ENCODE measurements at regions of chr6 and their contacts with region 1.

Region 1: DNA sequence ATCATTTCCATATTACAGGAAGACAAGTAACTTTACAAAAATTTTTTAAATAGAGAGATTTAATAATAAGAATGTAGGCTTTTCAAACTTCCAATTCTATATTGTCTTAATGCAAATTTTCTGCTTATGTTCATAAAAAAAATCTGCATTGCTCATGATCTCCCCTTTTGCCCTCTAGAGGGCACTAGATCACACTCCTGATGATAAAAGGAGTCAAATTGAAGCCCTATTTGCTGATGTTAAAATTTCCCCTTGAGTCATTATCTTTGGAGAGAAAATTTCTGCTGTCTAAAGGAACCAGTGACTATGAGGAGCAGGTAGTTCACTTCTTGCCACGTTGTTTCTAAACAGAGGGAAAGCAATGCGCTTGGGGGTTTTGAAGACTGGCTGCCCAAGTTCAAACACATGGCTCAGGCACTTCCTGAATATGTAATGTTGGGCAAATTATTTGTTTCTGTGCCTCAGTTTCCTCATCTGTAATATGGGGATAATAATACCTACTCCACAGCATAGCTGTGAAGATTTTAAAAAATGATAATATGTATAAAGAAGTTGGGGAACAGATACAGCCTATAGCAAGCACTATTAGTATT is 874.2 kb downstream of the TFAP2A start:
- DNase-seq: peak; percentile 58
- H3K4me3 ChIP-seq: no peak overlapping the region
- H3K27ac ChIP-seq: peak overlapping the region; percentile 48
- H3K4me1 ChIP-seq: peaks cover 23% of the 10 kb centered on the region
- H3K27me3 ChIP-seq: no peaks in the 10 kb centered on the region
- CTCF ChIP-seq: peak; percentile 38
- POLR2A ChIP-seq: no peak

Region 2: DNA sequence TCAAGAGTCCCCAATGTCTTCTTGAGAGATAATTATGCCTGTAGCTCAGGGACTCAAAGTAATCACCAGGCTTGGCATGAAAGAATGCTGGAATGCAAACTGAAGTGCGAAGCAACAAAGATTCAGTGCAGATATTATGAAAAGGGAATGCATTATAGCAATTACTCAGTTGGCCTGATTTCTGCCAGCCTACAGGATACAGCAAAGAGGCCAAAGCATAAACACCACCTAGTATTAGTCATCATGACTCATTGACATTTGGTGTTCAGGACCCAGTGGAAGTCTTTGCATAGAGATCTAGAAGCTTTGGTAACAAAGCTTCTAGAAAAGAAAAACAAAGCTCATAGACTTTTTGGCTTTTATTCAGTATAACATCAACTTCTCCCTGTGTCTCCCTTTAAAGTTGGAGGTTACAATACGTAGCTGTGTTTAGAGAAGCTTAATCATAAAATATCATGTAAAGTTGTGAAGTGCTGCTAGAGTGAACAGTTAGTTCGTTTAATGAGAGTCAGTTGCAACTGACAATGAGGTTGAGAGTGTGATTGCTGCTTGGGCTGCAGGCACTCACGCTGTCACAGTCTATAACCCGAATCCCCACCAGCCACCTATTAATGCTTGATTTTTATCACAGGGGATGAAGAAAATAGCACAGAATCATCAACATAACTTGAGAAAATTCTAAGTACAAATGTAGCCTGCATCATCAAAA is 58.4 kb before region 1 on chr6:
- CTCF ChIA-PET with region 1: no interaction called
- POLR2A ChIA-PET with region 1: no interaction called
- dilution Hi-C with region 1: no loop called
- intact Hi-C with region 1: loop called (anchors 1 kb)
- DNase-seq: peak; percentile 86
- H3K4me3 ChIP-seq: no peak overlapping the region
- H3K27ac ChIP-seq: peak overlapping the region; percentile 65
- H3K4me1 ChIP-seq: peaks cover 19% of the 10 kb centered on the region
- H3K27me3 ChIP-seq: no peaks in the 10 kb centered on the region
- CTCF ChIP-seq: no peak
- POLR2A ChIP-seq: no peak

Region 3: DNA sequence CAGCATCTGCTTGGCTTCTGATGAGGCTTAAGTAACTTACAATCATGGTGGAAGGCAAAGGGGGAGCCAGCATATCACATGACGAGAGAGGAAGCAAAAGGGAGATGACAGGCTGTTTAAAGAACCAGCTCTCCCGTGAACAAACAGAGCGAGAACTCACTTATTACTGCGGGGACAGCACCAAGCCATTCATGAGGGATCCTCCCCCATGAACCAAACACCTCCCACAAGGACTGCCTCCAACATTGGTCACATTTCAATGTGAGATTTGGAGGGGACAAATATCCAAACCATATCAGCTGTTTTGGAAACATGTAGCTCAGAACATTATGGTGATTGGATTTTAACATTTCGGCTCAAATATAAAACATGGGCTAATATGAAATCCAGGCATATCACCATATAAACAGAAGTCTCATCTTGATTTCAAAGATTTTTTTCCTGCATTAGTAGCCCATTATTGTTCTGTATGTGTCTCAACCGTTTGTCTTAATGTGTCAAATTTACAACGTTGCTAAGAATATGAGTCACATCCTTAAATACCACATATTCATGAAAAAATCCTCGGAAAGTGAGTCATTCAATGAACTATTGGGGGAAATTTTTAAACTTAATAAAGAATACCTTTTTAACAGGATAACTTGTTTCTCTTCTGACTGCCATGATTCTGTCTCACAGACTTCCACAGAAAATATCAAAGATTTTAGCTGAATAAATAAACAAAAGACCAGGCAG is 20.0 kb before region 1 on chr6:
- CTCF ChIA-PET with region 1: interaction called, 7 read pairs
- POLR2A ChIA-PET with region 1: no interaction called
- dilution Hi-C with region 1: no loop called
- intact Hi-C with region 1: loop called (anchors 1 kb)
- DNase-seq: peak; percentile 88
- H3K4me3 ChIP-seq: peak overlapping the region in 1 of 3 experiments; percentile 30
- H3K27ac ChIP-seq: peak overlapping the region; percentile 92
- H3K4me1 ChIP-seq: peaks cover 33% of the 10 kb centered on the region
- H3K27me3 ChIP-seq: no peaks in the 10 kb centered on the region
- CTCF ChIP-seq: no peak
- POLR2A ChIP-seq: no peak

Region 4: DNA sequence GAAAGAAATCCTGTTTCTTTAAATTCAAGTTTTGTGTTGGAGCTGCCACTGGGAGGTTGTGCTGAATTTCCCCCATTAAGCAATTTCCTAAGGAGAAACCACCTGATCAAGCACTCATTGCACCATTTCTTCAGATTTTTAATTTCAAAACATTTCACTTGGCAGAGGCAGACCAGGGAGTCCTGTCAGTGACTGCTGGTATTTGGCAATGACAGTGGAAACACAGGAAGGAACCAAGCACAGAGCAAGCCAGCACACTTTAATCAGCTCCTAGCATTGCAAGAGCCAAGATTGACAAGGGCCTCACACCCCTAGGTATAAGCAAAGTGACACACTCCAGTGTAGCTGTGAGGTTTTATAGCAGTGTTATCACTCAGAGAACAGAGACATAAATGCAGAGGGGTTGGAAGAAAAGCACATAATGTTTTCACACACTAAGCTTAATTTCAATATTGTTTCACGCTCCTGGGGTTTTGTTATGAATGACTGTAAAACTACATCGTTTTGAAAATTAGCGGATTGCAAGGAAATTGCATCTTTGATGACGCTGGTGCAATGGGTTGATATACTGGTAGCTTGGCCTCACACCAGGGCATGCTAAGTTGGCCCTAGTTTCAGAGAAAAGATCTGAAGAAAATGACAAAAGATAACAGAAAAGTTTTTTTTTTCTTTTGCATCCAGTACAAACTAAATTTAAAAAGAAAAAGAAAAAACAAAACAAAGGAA is 105.9 kb after region 1 on chr6:
- CTCF ChIA-PET with region 1: interaction called, 4 read pairs
- POLR2A ChIA-PET with region 1: no interaction called
- dilution Hi-C with region 1: no loop called
- intact Hi-C with region 1: loop called (anchors 5 kb)
- DNase-seq: peak; percentile 78
- H3K4me3 ChIP-seq: no peak overlapping the region
- H3K27ac ChIP-seq: peak overlapping the region; percentile 58
- H3K4me1 ChIP-seq: peaks cover 40% of the 10 kb centered on the region
- H3K27me3 ChIP-seq: no peaks in the 10 kb centered on the region
- CTCF ChIP-seq: no peak
- POLR2A ChIP-seq: no peak

Region 5: DNA sequence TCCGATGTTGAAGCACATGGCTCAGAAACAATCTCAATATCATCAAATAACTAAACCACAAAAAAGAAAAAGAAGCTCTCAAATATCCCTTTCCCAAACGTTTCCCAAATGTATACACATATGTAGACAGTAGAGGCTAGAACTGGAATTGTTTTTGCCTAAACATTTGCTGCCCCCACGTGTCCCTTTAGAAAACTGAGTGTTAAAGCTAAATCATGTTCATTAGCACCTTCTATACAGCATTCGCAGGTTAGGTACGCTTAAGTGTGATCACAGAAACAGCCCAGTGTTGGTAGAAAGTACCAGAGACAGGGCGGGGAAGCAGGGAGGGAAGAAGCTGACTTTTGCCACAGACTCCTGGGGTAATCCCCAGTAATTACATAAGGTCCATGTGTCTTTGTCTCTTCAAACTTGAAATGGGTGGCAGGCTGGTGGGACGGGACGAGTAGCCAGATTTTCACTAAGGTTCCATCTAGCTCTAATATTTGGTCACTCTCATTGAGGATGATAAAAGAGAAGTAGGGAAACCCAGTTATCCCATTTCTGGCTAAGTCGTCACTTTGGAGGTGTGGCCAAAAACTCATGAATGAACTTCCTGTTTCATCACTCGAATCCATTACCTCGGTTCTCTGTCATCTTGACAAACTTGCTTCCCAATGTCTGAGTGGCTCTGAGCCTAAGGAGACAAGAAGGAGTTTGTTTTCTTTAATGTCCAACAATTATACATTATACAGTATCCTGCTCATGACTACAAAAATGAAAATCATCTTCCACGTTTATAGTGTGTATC is 889.2 kb after region 1 on chr6:
- CTCF ChIA-PET with region 1: no interaction called
- POLR2A ChIA-PET with region 1: no interaction called
- dilution Hi-C with region 1: no loop called
- intact Hi-C with region 1: loop called (anchors 1 kb)
- DNase-seq: peak; percentile 65
- H3K4me3 ChIP-seq: no peak overlapping the region
- H3K27ac ChIP-seq: no peak overlapping the region
- H3K4me1 ChIP-seq: peaks cover 5% of the 10 kb centered on the region
- H3K27me3 ChIP-seq: peaks cover 24 to 41% of the 10 kb centered on the region in 2 experiments
- CTCF ChIP-seq: peak; percentile 34 to 37
- POLR2A ChIP-seq: no peak